Endothelial cell of umbilical vein (primary cell): ENCODE measurements at regions of chr3 and their contacts with region 1.

Region 1: GRCh38 chr3:123584988-123585937 is at the start of gene HACD2:
- DNase-seq: peak; percentile 98
- H3K4me3 ChIP-seq: peak within 1 kb of the TSS; percentile 66 to 87 (median 85)
- H3K27ac ChIP-seq: peak within 1 kb of the TSS; percentile 90
- H3K4me1 ChIP-seq: peaks cover 7% of the 10 kb centered on the region
- H3K27me3 ChIP-seq: no peaks in the 10 kb centered on the region
- CTCF ChIP-seq: no peak
- POLR2A ChIP-seq: peak; percentile 91
- total RNA-seq, gene HACD2: 20.9 and 23.5 TPM in 2 replicates

Region 2: GRCh38 chr3:123081718-123082369 is 503.4 kb before region 1 on chr3:
- CTCF ChIA-PET with region 1: no interaction called
- POLR2A ChIA-PET with region 1: no interaction called
- dilution Hi-C with region 1: no loop called
- intact Hi-C with region 1: loop called (anchors 10 kb)
- DNase-seq: peak; percentile 38
- H3K4me3 ChIP-seq: no peak overlapping the region
- H3K27ac ChIP-seq: peak overlapping the region; percentile 60
- H3K4me1 ChIP-seq: peaks cover 73% of the 10 kb centered on the region
- H3K27me3 ChIP-seq: no peaks in the 10 kb centered on the region
- CTCF ChIP-seq: no peak
- POLR2A ChIP-seq: no peak

Region 3: GRCh38 chr3:123524981-123525380 is 60.3 kb before region 1 on chr3:
- CTCF ChIA-PET with region 1: no interaction called
- POLR2A ChIA-PET with region 1: no interaction called
- dilution Hi-C with region 1: no loop called
- intact Hi-C with region 1: no loop called
- DNase-seq: no peak
- H3K4me3 ChIP-seq: no peak overlapping the region
- H3K27ac ChIP-seq: no peak overlapping the region
- H3K4me1 ChIP-seq: peaks cover 14% of the 10 kb centered on the region
- H3K27me3 ChIP-seq: no peaks in the 10 kb centered on the region
- CTCF ChIP-seq: no peak
- POLR2A ChIP-seq: no peak

Region 4: DNA sequence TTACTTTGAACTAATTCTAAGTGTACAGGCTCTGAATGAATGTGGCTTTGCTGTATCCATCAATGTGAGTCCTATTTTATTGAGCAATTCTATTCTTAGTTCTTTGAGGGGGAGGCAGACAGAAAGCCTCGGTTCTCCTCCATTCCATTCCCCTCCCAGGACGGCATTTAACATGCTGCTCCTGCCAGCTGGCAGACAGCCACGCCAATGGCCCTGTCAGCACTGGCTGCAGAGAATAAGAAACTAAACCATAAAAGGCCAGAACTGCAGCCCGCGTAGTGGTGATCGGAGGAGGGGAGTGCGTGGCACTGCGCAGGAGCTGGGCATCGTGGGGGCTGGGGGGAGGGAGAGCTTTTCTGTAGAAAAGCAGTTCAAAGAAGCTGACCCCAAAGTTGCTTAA is 75.6 kb after region 1 on chr3:
- CTCF ChIA-PET with region 1: no interaction called
- POLR2A ChIA-PET with region 1: no interaction called
- dilution Hi-C with region 1: no loop called
- intact Hi-C with region 1: no loop called
- DNase-seq: peak; percentile 89
- H3K4me3 ChIP-seq: no peak overlapping the region
- H3K27ac ChIP-seq: no peak overlapping the region
- H3K4me1 ChIP-seq: peaks cover 23% of the 10 kb centered on the region
- H3K27me3 ChIP-seq: no peaks in the 10 kb centered on the region
- CTCF ChIP-seq: no peak
- POLR2A ChIP-seq: no peak

Region 5: DNA sequence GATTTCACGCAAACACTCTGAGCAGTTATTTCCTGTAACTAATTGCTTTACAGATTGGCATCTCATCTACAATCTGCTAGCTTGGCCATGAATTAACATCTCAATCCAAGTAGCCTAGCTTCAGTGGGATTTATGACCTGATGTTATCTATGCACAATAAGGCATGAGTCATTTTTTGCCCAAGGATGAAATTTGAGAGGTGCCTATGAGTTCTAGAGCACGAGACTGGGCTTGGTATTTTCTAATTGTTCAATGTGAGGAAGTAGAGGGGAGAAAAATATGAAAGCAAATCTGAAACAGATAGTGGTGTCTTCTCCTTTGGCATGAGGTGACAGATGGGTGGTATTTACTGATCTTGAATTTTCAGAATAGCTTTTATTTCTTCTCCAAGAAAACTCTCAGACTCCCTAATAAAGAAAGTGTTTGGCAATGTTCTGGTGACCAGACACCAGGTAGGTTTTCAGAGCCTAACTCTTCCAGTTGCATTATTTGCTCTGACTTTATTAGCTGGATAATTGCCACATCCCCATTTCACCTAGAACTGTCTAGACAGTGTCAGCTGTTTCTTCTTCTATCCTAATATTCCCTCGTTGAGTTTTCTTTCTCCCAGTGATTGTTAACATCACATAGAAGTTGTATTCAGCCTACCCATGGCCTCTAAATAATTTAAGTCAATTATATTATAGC is 844.0 kb after region 1 on chr3:
- CTCF ChIA-PET with region 1: no interaction called
- POLR2A ChIA-PET with region 1: no interaction called
- dilution Hi-C with region 1: no loop called
- intact Hi-C with region 1: loop called (anchors 5 kb)
- DNase-seq: peak; percentile 88
- H3K4me3 ChIP-seq: no peak overlapping the region
- H3K27ac ChIP-seq: peak overlapping the region; percentile 23
- H3K4me1 ChIP-seq: peaks cover 27% of the 10 kb centered on the region
- H3K27me3 ChIP-seq: no peaks in the 10 kb centered on the region
- CTCF ChIP-seq: no peak
- POLR2A ChIP-seq: no peak